SK-N-SH (cell line): ENCODE measurements at regions of chr11 and their contacts with region 1.

Region 1: DNA sequence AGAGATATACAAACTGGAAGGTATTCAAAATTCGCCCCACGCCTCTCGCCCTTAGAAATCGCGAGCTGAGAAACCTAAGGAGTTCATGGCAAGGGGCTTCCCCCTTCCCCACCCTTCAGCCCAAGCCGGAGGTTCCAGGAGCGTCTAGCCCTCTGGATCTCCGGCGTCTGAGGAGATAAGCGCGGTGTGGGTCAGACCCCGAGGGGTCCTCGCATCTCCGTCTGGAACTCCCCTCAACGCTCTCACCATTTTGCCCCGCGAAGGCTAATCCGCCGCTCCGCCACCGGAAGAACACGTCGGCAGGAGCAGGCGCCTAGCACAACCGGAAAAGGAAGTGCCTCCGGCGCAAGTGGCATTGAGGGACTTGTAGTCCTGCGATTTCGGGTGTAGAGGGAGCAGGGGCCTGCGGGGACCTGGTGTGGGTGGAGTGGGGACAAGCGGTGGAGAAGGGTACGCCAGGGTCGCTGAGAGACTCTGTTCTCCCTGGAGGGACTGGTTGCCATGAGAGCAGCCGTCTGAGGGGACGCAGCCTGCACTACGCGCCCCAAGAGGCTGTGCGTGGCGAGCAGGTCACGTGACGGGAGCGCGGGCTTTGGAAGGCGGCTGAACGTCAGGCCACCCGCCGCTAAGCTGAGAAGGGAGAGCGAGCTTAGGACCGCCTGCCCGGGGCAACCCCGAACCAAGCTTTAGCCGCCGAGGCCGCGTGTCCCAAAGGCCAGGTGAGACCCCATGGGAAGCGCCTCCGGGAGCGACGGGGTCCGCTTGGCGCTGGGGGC is at the starts of genes FEN1 and TMEM258:
- DNase-seq: peak; percentile 88
- H3K4me3 ChIP-seq: peak within 1 kb of the TSS; percentile 95 to 98
- H3K27ac ChIP-seq: peak within 1 kb of the TSS; percentile 99 to 100
- H3K4me1 ChIP-seq: peaks cover 5 to 19% of the 10 kb centered on the region in 2 experiments; a peak in 3 of 4 replicates
- H3K27me3 ChIP-seq: no peaks in the 10 kb centered on the region
- CTCF ChIP-seq: no peak
- EP300 ChIP-seq: no peak
- RAD21 ChIP-seq: no peak
- polyA plus RNA-seq, gene FEN1: 35.9 and 39.5 TPM in 2 replicates
- polyA plus RNA-seq, gene TMEM258: 454 and 617 TPM in 2 replicates

Region 2: GRCh38 chr11:61071208-61071681 is 721.3 kb before region 1 on chr11:
- CTCF ChIA-PET with region 1: no interaction called
- POLR2A ChIA-PET with region 1: no interaction called
- DNase-seq: no peak
- H3K4me3 ChIP-seq: no peak overlapping the region
- H3K27ac ChIP-seq: no peak overlapping the region
- H3K4me1 ChIP-seq: peaks cover 0 to 2% of the 10 kb centered on the region in 2 experiments; a peak in 1 of 4 replicates
- H3K27me3 ChIP-seq: no peaks in the 10 kb centered on the region
- CTCF ChIP-seq: no peak
- EP300 ChIP-seq: no peak
- RAD21 ChIP-seq: no peak

Region 3: DNA sequence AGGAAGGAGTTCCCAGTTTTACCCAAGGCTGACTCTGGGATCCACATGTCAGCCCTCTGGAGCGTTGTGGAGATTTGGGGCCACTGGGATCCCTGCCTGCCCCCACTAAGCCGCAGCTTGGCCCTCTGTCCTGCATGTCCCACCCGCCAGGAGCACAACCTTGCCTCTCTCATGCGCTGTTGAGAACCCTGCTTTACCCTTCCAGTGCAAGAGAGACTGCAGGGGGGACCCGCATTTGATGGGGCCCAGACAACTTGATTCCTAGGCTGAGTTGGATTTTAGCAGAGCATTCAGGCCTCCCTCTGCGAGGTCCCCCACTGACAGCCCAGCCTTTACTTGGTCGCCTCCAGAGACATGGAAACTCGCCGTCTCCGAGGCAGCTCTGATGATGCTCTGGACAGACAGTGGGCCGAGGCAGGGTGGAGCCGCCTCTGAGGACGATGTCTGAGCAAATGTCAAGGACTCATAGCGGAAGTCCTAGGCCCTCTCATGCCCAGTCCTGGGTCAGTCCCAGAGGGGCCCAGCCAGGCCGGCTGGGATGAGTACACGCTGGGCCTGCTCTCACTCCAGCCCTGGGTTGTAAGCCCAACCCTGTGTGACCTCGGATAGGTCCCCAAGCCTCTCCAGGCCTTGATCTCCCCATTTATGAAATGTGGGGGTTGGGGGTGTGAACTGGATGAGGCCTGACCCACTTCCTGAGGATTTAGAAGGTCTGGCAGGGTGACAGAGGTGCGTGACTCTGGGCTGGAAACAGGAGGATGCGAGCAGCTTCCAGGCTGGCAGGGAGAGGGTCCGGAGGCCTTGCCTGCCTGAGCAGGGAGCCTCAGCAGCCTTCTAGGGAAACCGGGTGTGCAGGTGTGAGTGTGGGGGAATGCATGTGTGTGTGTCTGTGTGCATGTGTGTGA is 689.6 kb before region 1 on chr11:
- CTCF ChIA-PET with region 1: no interaction called
- POLR2A ChIA-PET with region 1: no interaction called
- DNase-seq: no peak
- H3K4me3 ChIP-seq: no peak overlapping the region
- H3K27ac ChIP-seq: no peak overlapping the region
- H3K4me1 ChIP-seq: no peaks in the 10 kb centered on the region
- H3K27me3 ChIP-seq: no peaks in the 10 kb centered on the region
- CTCF ChIP-seq: no peak
- EP300 ChIP-seq: no peak
- RAD21 ChIP-seq: no peak

Region 4: DNA sequence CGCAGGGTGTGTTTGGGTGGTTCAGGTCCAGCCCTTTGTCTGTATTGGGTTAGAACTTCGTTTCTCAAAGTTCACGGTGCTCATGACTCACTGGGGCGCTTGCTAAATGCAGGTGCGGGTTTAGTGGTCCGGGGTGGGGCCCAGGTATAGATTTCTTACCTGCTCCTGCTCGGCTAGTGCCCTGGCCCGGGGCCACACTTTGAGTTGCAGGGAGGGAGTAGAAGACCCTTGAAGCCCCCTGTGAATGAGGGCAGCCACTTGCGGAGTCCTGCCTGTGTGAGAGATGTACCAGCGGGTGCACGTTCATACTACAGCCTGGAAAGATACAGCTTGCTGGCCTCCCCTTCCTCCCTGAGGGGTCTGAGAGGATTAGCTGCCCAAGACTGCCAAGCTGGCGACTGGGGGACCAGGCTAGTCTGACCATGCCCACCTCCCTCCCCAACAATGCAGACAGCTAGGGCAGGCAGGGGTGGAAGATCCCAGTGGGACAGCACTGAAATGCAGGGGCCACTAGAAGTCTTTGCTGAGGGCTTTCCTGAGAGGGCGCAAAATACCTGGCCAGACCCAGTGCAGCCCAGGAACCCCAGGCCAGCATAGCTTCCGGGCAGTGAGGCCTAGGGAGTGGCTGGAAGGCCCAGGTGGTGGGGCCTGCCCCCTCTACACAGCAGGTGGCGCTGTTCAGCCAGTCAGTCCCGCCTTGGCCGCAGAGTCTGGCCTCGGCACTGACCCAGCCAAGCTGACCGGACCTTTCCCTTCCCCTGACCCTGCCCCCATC is 45.1 kb before region 1 on chr11:
- CTCF ChIA-PET with region 1: interaction called, 285 read pairs
- POLR2A ChIA-PET with region 1: interaction called, 23 read pairs
- DNase-seq: peak; percentile 95
- H3K4me3 ChIP-seq: no peak overlapping the region; a peak in 1 of 4 replicates
- H3K27ac ChIP-seq: no peak overlapping the region; a peak in 1 of 4 replicates
- H3K4me1 ChIP-seq: peaks cover 0 to 11% of the 10 kb centered on the region in 2 experiments; a peak in 1 of 4 replicates
- H3K27me3 ChIP-seq: no peaks in the 10 kb centered on the region
- CTCF ChIP-seq: peak; percentile 87
- EP300 ChIP-seq: no peak
- RAD21 ChIP-seq: peak; percentile 79

Region 5: DNA sequence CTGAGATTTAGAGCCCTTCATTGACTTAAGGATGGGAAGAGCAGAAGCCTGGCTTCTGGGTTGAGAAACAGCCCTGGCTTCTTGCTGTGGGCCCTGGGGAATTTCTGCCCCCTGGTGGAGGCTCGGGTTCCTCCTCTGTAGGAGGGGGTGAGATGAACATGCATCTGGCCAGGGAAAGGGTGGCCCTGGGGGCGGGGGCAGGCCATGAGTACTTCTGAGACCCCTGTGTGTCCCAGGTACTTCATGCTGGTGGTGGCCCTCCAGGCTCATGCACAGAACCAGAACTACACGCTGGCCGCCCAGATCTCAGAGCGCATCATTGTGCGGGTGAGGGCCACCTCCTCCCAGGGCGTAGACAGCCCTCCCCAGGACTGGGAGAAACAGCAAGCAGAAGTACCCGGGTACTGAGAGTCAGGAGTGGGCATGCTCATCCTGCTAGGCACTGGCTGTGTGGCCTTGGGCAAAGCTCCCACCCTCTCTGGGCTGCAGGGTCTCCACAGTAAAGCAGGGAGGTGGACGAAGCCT is 15.9 kb before region 1 on chr11:
- CTCF ChIA-PET with region 1: interaction called, 70 read pairs
- POLR2A ChIA-PET with region 1: interaction called, 3 read pairs
- DNase-seq: peak; percentile 90
- H3K4me3 ChIP-seq: no peak overlapping the region
- H3K27ac ChIP-seq: no peak overlapping the region; a peak in 1 of 4 replicates
- H3K4me1 ChIP-seq: peaks cover 0 to 34% of the 10 kb centered on the region in 2 experiments; a peak in 1 of 4 replicates
- H3K27me3 ChIP-seq: no peaks in the 10 kb centered on the region
- CTCF ChIP-seq: peak; percentile 73
- EP300 ChIP-seq: no peak
- RAD21 ChIP-seq: peak; percentile 70

Region 6: DNA sequence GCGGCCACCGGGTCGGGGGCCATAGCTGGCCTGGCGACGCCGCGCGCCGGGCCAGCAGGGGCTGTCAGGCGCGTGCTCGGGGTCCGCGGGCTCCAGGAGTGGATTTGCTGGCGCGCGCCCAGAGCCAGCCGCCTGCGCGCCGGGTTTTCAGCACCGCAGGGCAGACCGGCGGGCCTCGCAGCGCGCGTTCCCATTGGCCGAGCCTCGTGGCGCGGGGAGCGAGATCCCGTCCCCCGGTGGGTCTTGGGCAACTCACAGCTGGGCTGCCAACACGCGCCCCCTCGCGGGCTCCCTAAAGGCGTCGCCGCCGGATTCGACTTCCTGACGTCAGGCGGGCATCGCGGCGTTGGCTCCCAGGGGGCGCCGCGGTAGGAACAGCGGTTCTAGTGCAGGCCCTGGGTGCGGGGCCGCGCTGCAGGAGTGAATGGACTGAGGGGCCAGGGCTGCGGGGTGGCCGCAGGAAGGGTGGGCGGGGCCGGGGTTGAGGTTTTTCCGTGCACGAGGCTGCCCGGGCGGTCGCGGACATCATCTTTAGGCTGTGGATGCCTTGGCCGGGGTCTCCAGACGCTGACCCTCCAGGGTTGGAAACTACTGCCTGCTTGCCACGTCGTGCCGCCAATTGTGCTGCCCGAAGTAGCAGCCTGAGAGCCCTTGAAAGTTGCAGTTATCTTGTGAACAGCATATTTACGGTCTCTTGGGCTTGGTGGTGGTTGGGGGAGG is 24.4 kb after region 1 on chr11 and contains the start of gene FADS1:
- CTCF ChIA-PET with region 1: interaction called, 149 read pairs
- POLR2A ChIA-PET with region 1: interaction called, 47 read pairs
- DNase-seq: peak; percentile 95
- H3K4me3 ChIP-seq: peak within 1 kb of the TSS; percentile 83 to 87
- H3K27ac ChIP-seq: peak within 1 kb of the TSS; percentile 88 to 98
- H3K4me1 ChIP-seq: peaks cover 17 to 19% of the 10 kb centered on the region in 2 experiments; a peak in 3 of 4 replicates
- H3K27me3 ChIP-seq: no peaks in the 10 kb centered on the region
- CTCF ChIP-seq: peak; percentile 63
- EP300 ChIP-seq: no peak
- RAD21 ChIP-seq: peak; percentile 36
- polyA plus RNA-seq, gene FADS1: 20.6 and 26.4 TPM in 2 replicates

Region 7: GRCh38 chr11:61871158-61871597 is 78.7 kb after region 1 on chr11:
- CTCF ChIA-PET with region 1: interaction called, 23 read pairs
- POLR2A ChIA-PET with region 1: interaction called, 4 read pairs
- DNase-seq: peak; percentile 94
- H3K4me3 ChIP-seq: peak overlapping the region; percentile 12 to 17; a peak in 2 of 4 replicates
- H3K27ac ChIP-seq: no peak overlapping the region
- H3K4me1 ChIP-seq: peaks cover 0 to 13% of the 10 kb centered on the region in 2 experiments; a peak in 2 of 4 replicates
- H3K27me3 ChIP-seq: no peaks in the 10 kb centered on the region
- CTCF ChIP-seq: peak; percentile 89
- EP300 ChIP-seq: no peak
- RAD21 ChIP-seq: peak; percentile 88

Region 8: DNA sequence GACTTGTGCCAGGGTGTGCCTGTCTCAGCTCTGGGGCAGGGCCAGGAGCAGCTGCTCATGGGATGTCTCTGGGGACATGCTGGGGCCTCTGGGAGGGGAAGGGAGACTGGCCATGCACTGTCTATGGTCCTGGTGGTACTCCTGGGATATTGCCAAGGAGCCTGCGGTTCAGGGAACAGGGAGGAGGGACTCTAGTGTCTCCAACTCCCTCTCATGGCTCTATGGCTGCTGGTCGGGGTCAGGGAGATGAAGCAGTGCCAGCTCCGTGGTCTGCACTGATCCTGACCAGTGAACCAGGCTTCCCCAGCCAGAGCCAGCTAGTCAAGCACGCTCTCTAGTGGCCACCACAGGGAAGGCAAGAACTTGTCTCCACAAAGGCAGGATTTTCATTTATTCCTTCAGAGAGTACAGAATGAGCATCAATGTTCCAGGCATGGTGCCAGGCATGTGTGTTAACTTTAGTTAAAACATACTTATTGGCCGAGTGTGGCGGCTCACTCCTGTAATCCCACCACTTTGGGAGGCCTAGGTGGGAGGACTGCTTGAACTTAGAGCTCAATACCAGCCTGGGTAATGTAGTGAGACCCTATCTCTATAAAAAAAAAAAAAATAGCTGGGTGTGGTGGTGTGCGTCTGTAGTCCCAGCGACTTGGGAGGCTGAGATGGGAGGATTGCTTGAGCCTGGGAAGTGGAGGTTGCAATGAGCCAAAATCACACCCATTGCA is 155.2 kb after region 1 on chr11:
- CTCF ChIA-PET with region 1: interaction called, 52 read pairs
- POLR2A ChIA-PET with region 1: interaction called, 5 read pairs
- DNase-seq: peak; percentile 87
- H3K4me3 ChIP-seq: no peak overlapping the region
- H3K27ac ChIP-seq: no peak overlapping the region; a peak in 1 of 4 replicates
- H3K4me1 ChIP-seq: peaks cover 11 to 18% of the 10 kb centered on the region in 2 experiments; a peak in 2 of 4 replicates
- H3K27me3 ChIP-seq: no peaks in the 10 kb centered on the region
- CTCF ChIP-seq: peak; percentile 95
- EP300 ChIP-seq: no peak
- RAD21 ChIP-seq: peak; percentile 100